ENCODE measurements at regions of chr18 and their contacts with region 1.

Region 1: GRCh38 chr18:63741769-63742168 is 33.4 kb upstream of the SERPINB7 start:
- DNase-seq: peak; percentile 81
- ATAC-seq: peak; percentile 72
- H3K4me3 ChIP-seq: no peak overlapping the region
- H3K27ac ChIP-seq: peak overlapping the region; percentile 97
- H3K4me1 ChIP-seq: peaks cover 20% of the 10 kb centered on the region
- H3K27me3 ChIP-seq: no peaks in the 10 kb centered on the region
- CTCF ChIP-seq: peak; percentile 88

Region 2: DNA sequence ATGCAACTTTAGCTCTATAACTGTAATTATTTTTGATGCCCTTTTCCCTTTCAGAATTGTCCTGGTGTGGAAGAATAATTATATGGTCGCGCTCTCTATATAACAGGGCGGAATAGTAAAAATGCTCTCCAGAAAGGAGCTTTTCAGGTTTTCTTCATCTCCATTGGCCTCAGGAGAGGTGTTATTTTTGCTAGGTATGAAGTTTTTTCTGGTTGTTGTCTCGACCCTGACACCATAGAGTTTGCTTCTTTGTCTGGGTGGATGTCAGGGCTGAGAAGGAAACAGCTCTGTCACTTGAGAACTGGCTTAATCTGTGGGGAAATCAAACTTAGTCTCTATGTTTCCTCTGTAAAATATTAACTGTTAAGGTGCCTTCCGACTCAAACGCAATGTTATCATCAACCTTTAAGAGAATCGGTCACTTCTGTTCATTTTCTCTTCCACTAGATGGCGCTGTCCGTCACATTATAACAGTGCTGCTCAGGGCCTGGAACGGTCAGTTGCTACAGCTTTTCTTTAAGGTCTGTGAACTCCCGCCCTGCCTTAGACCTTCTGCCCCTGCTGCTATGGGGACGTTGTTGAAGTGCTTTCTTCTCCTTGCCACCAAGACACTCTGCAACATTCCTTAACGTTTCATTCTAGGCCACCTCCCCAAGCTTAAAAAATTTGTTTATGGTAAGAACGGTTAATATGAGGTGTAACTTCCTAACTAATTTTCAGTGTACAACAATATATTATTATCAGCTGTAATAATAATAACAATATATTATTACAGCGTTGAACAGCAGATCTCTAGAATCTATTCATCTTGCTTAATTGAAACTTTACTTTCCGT is 223.4 kb before region 1 on chr18:
- CTCF ChIA-PET with region 1: interaction called, 30 read pairs
- POLR2A ChIA-PET with region 1: interaction called, 29 read pairs
- intact Hi-C with region 1: loop called (anchors 1 kb)
- DNase-seq: peak; percentile 91
- ATAC-seq: peak; percentile 97
- H3K4me3 ChIP-seq: no peak overlapping the region
- H3K27ac ChIP-seq: no peak overlapping the region
- H3K4me1 ChIP-seq: peaks cover 8% of the 10 kb centered on the region; the same call in 1 of the 2 replicates
- H3K27me3 ChIP-seq: no peaks in the 10 kb centered on the region
- CTCF ChIP-seq: peak; percentile 76

Region 3: GRCh38 chr18:63676526-63676925 is 65.2 kb before region 1 on chr18:
- CTCF ChIA-PET with region 1: interaction called, 10 read pairs
- POLR2A ChIA-PET with region 1: no interaction called
- intact Hi-C with region 1: loop called (anchors 1 kb)
- DNase-seq: peak; percentile 71
- ATAC-seq: peak; percentile 70
- H3K4me3 ChIP-seq: no peak overlapping the region
- H3K27ac ChIP-seq: peak overlapping the region; percentile 73
- H3K4me1 ChIP-seq: peaks cover 37% of the 10 kb centered on the region
- H3K27me3 ChIP-seq: no peaks in the 10 kb centered on the region
- CTCF ChIP-seq: peak; percentile 88

Region 4: DNA sequence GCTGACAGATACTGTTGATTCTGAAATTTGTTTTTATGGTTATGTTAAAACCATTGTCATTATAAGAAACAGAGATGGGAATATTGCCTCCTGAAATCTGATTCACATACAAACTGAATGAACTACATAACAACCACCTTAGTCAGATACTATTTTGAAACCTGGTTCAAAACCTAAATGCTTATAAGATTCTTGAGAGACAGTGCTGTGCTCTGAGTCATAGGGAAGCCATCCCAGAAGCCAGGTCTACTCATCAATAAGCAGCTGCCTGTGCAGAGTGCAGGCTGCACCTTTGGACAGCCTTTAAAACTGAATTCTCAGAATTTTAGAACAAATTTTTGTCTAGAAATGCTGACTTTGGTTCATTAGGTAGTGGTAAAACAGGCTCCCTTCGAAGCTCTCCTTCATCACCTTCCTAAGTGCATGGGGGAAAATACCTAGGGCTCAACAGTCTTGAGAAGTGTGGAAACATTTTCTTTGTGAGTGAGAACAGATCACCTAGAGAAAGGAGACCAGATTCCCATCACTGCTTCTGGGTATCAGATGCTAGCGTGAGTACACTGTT is 33.5 kb after region 1 on chr18 and contains the start of gene SERPINB7:
- CTCF ChIA-PET with region 1: no interaction called
- POLR2A ChIA-PET with region 1: no interaction called
- intact Hi-C with region 1: loop called (anchors 5 kb)
- DNase-seq: peak; percentile 96
- ATAC-seq: peak; percentile 92
- H3K4me3 ChIP-seq: peak within 1 kb of the TSS; percentile 51
- H3K27ac ChIP-seq: peak within 1 kb of the TSS; percentile 97
- H3K4me1 ChIP-seq: peaks cover 74% of the 10 kb centered on the region
- H3K27me3 ChIP-seq: no peaks in the 10 kb centered on the region
- CTCF ChIP-seq: no peak
- total RNA-seq, gene SERPINB7: 71.9 and 74.5 TPM in 2 replicates

Region 5: GRCh38 chr18:63936156-63936931 is 194.6 kb after region 1 on chr18:
- CTCF ChIA-PET with region 1: interaction called, 4 read pairs
- POLR2A ChIA-PET with region 1: no interaction called
- intact Hi-C with region 1: loop called (anchors 2 kb)
- DNase-seq: peak; percentile 74
- ATAC-seq: peak; percentile 99
- H3K4me3 ChIP-seq: peak overlapping the region; percentile 82
- H3K27ac ChIP-seq: no peak overlapping the region
- H3K4me1 ChIP-seq: no peaks in the 10 kb centered on the region
- H3K27me3 ChIP-seq: no peaks in the 10 kb centered on the region
- CTCF ChIP-seq: peak; percentile 79